Activated CD4-positive, alpha-beta T cell treated with anti-CD3 and anti-CD28 coated beads, Interleukin-2, amount 10 ng/mL, durations not matched to agents 24 days and 14 days (primary cell): ENCODE measurements at regions of chr20 and their contacts with region 1.

Region 1: GRCh38 chr20:63381807-63382322 is 20.7 kb upstream of the CHRNA4 start:
- DNase-seq: peak; percentile 81
- H3K4me3 Mint-ChIP-seq: no peak overlapping the region
- H3K27ac Mint-ChIP-seq: no peak overlapping the region
- H3K4me1 Mint-ChIP-seq: no peaks in the 10 kb centered on the region
- H3K27me3 Mint-ChIP-seq: peaks cover 4% of the 10 kb centered on the region

Region 2: DNA sequence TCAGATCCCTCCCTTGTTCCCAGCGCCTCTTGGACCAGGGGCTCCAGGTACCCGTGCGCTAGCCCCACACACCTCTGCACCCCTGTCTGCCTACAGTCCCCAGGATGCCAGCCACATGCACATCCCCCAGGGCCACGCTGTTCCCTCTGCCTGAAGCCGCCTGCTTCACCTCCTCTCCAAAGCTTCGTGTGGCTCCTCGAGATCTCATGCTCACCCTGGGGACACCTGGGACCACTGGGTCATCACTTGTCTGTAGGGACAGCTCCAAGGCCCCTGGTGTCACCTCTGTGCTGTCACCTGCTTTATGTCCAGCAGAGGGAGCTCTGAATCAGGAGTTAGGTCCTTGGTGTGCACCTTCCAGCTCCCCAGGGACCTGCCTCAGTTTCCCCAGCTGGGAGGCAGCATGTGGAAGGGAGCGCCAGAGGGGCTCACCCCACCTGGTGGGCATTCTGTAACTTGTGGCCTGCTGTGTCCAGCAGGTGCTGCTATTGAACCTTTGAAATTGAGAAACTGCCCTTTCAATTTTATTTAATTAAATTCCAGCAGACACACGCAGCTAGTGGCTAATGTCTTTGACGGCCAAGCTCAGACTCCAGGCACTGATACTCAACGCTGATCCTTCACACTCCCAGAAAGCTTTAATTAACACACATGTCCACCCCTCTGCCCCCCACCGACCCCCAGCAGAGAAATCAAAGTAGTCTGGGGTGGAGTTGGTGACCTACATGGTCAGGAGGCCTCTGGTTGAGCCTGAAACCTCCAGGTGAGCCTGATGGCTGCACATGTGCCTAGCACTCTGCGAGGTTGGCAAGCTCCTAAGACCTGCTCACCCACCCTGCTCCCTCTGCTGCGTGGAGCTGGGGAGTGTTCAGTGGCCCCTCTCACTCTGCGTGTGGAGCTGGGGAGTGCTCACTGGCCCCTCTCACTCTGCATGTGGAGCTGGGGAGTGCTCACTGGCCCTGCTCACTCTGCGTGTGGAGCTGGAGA is 158.4 kb before region 1 on chr20:
- intact Hi-C with region 1: loop called (anchors 1 kb)
- DNase-seq: peak; percentile 87
- H3K4me3 Mint-ChIP-seq: no peak overlapping the region
- H3K27ac Mint-ChIP-seq: no peak overlapping the region
- H3K4me1 Mint-ChIP-seq: no peaks in the 10 kb centered on the region
- H3K27me3 Mint-ChIP-seq: peaks cover 2% of the 10 kb centered on the region

Region 3: DNA sequence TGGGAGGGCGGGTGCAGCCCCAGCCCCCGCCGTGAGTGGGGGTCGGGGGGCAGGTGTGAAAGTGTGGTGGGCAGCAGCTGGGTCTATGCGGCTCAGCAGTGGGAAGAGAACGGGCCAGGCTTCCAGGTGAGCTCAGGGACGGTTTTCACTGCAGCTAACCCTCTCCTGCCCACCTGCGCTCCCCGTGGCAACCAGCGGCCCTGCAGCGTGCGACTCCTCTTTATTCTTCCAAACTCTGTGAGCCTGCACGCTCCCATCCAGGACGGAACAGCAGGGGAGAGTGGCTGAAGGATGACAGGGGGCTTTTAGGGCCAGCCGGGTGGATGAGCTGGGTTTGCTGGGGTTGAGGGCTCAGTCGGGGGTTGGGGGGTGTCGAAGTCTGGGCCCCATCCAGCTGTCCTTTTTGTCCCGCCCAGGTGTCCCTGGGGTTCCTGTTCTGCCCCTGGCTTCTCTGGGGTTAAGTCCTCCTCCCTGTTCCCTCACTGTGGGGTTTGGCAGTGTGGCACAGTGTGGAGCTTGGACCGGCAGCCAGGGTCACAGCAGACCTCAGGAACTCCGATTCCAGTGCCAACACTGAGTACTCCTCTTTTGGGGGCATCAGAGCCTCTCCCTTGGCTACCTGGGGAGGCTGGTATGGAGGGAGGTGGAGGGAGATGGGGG is 147.0 kb before region 1 on chr20:
- intact Hi-C with region 1: no loop called
- DNase-seq: no peak
- H3K4me3 Mint-ChIP-seq: no peak overlapping the region
- H3K27ac Mint-ChIP-seq: no peak overlapping the region
- H3K4me1 Mint-ChIP-seq: no peaks in the 10 kb centered on the region
- H3K27me3 Mint-ChIP-seq: peaks cover 22% of the 10 kb centered on the region

Region 4: GRCh38 chr20:63309261-63310071 is 72.4 kb before region 1 on chr20:
- intact Hi-C with region 1: loop called (anchors 5 kb)
- DNase-seq: peak; percentile 76
- H3K4me3 Mint-ChIP-seq: no peak overlapping the region
- H3K27ac Mint-ChIP-seq: no peak overlapping the region
- H3K4me1 Mint-ChIP-seq: no peaks in the 10 kb centered on the region
- H3K27me3 Mint-ChIP-seq: no peaks in the 10 kb centered on the region